Motor neuron (in vitro differentiated cells): ENCODE measurements at regions of chr3 and their contacts with region 1.

Region 1: GRCh38 chr3:34683851-34684250 is 885.4 kb downstream of the PDCD6IP start:
- ATAC-seq: peak in 5 of 8 experiments; percentile 27 to 84 (median 81)
- H3K4me3 ChIP-seq: no peak overlapping the region
- H3K27ac ChIP-seq: no peak overlapping the region
- H3K4me1 ChIP-seq: no peaks in the 10 kb centered on the region

Region 2: DNA sequence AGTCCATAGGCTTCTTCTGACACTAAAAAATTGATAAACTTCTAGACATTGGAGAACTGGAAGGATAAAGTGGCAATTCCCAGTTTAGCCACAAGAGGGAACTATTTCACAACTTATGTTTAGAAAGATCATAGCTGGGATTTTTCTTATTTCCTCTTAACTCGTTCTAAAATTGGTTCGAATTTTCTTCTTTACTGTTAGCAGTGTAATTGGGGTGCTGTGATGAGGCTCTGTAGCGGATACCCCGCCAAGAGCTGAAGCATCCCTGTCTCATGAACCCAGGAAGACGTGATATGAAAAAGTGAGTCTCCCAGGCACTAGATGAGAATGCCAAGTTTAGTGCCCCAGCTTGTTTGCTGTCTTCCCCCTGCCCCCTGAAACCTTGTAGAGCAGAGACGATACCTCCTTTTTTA is 800.3 kb before region 1 on chr3:
- in situ Hi-C with region 1: loop called in 4 of 9 experiments (anchors 25 kb)
- ATAC-seq: peak in 6 of 8 experiments; percentile 9 to 52 (median 26)
- H3K4me3 ChIP-seq: no peak overlapping the region
- H3K27ac ChIP-seq: no peak overlapping the region
- H3K4me1 ChIP-seq: peaks cover 0 to 2% of the 10 kb centered on the region in 2 donors

Region 3: DNA sequence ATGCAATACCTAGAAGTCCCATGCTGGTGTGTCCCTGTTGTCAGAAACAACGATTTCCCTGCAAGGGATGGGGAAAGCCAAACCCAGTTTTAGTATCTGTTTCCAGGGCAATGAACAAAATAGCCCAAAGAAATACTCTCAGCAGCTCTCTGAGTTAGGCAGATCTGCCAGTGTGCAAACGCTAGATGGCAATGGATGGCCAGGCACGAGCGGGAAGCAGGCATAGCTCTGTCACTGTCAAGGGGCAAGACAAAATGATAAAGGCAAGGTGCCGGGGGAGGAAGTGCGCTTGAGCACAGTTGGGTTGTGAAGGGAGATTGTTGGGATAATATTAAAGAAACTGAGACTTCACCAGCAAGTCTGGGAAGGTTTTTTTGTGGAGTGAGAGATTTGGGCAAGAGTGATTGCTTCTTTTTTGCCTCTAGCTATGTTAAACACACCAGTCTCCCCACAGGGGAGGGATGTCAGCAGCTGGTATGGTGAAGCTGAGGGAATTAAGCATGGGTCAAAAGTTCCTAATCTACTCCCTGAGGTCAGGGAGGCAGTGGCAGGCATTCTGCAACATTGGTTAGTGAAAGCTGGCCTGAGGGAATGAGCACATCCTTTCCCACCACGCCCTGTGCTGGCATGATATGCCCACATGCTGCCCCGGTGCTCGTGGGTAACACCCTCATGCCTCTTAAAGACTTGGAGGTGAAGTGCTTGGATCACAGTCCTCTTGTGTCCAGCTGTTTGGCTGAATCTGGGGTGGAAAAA is 767.9 kb before region 1 on chr3:
- in situ Hi-C with region 1: loop called in 1 of 9 experiments (anchors 25 kb)
- ATAC-seq: peak; percentile 44 to 82 (median 63)
- H3K4me3 ChIP-seq: no peak overlapping the region
- H3K27ac ChIP-seq: no peak overlapping the region
- H3K4me1 ChIP-seq: peaks cover 6 to 24% of the 10 kb centered on the region in 2 donors

Region 4: GRCh38 chr3:34106879-34107278 is 577.0 kb before region 1 on chr3:
- in situ Hi-C with region 1: loop called in 1 of 9 experiments (anchors 25 kb)
- ATAC-seq: peak in 4 of 8 experiments; percentile 56 to 80 (median 60)
- H3K4me3 ChIP-seq: no peak overlapping the region
- H3K27ac ChIP-seq: no peak overlapping the region
- H3K4me1 ChIP-seq: no peaks in the 10 kb centered on the region

Region 5: DNA sequence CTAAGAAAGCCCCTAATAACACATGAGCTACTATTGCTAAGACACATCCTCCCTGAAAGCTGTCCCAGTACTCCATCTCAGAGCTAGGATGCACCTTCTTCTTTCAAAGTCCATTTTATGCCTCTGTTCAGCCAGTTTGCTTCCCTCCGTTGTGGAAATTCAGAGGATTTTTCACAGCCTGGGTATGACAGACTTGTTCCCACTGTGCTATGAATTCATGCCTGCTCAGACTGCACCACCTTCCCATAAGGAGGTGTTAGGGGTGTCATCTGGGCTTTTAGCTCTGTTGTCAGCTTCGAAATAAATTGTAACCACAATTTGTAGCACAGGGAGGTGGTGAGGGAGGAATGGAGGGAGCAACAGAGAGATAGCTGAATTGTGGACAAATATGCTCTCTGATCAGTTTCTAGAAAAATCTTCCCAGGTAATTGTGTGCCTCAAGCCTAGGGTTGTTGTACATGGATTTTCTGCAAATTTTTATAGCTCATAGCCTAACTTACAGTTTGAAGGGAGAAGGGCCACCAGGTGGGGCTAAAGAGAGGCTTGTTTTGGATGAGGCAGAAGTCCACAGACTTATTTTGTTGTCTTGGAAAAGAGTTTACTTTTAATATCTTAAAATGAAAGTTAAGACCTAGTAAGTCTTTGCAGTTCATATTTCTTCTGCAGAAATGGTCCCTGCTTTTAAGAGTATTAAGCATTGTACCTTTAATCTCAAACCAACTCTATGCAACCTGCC is 423.4 kb before region 1 on chr3:
- in situ Hi-C with region 1: loop called in 1 of 9 experiments (anchors 25 kb)
- ATAC-seq: peak; percentile 43 to 73 (median 54)
- H3K4me3 ChIP-seq: no peak overlapping the region
- H3K27ac ChIP-seq: no peak overlapping the region
- H3K4me1 ChIP-seq: peaks cover 15 to 38% of the 10 kb centered on the region in 2 donors